Activated CD4-positive, alpha-beta T cell treated with anti-CD3 and anti-CD28 coated beads, Interleukin-2, amount 10 ng/mL, durations not matched to agents 7 days and 5 days (primary cell): ENCODE measurements at regions of chr5 and their contacts with region 1.

Region 1: DNA sequence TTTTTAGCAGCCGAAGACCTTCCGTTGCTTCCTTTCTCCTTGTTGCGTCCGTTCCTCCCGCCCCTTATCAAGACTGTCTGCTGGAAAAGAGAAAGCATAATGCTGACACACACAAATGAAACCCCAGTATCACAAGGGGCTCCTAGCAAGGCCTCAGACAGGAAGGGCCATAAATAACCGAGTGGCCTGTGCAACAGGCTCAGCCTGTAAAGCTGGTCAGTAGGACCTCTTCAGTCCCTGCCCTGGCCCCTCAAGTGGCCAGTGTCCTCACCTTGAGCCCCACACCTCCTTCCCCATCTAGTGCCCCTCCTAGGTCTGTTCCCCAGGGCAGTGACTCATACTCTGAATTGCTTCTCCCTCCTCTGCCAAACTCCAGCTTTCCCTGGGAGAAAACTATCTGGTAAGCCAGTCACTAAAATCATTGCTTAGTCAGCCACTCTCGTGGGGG is 174.6 kb upstream of the IL12B start:
- DNase-seq: no peak
- H3K4me3 Mint-ChIP-seq: no peak overlapping the region
- H3K27ac Mint-ChIP-seq: peak overlapping the region; percentile 27
- H3K4me1 Mint-ChIP-seq: no peaks in the 10 kb centered on the region
- H3K27me3 Mint-ChIP-seq: peaks cover 4% of the 10 kb centered on the region

Region 2: DNA sequence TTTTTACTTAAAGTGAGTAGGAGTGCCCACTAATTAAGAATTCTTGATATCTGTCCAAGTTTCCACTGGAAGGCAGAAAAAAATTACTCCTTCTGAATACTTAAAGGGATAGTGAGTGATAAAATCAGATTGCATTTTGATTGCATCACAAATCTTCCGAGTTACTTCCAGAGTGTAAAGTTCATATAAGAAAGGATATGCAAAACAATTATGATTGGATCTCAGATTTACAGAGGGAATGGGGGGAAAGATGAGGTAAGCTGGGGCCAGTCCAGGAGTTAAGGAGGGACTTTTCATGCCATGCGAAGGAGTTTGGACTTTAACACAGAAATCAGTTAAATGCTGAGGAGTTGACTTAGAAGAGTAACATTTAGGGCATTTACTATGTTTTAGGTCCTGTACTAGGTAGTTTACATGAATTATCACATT is 286.3 kb before region 1 on chr5:
- CTCF ChIA-PET with region 1: no interaction called
- POLR2A ChIA-PET with region 1: no interaction called
- DNase-seq: no peak
- H3K4me3 Mint-ChIP-seq: no peak overlapping the region
- H3K27ac Mint-ChIP-seq: no peak overlapping the region
- H3K4me1 Mint-ChIP-seq: peaks cover 7% of the 10 kb centered on the region
- H3K27me3 Mint-ChIP-seq: no peaks in the 10 kb centered on the region

Region 3: GRCh38 chr5:159478950-159479349 is 25.9 kb before region 1 on chr5:
- CTCF ChIA-PET with region 1: no interaction called
- POLR2A ChIA-PET with region 1: no interaction called
- DNase-seq: peak; percentile 21
- H3K4me3 Mint-ChIP-seq: no peak overlapping the region
- H3K27ac Mint-ChIP-seq: no peak overlapping the region
- H3K4me1 Mint-ChIP-seq: peaks cover 8% of the 10 kb centered on the region
- H3K27me3 Mint-ChIP-seq: peaks cover 33% of the 10 kb centered on the region

Region 4: DNA sequence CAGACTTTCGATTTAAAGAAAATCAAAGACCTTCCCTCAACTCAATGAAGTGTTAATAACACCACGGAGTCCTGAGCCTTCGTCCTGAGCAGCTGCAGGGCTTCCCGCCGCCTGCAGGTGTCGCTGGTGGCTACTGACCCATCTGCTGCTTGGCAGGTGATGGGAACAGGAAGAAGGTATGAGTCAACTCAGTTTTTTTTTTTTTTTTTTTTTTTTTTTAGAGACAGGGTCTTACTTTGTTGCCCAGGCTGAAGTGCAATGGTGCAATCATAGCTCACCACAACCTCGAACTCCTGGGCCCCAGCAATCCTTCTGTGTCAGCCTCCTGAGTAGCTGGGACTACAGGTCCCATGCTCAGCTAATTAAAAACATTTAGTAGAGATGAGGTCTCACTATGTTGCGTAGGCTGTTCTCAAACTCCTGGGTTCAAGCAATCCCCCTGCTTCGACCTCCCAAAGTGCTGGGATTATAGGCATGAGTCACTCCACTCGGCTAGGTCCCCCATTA is 11.1 kb after region 1 on chr5:
- CTCF ChIA-PET with region 1: interaction called, 12 read pairs
- POLR2A ChIA-PET with region 1: no interaction called
- DNase-seq: peak; percentile 72
- H3K4me3 Mint-ChIP-seq: no peak overlapping the region
- H3K27ac Mint-ChIP-seq: no peak overlapping the region
- H3K4me1 Mint-ChIP-seq: peaks cover 11% of the 10 kb centered on the region
- H3K27me3 Mint-ChIP-seq: peaks cover 32% of the 10 kb centered on the region